PC-9 (cell line): ENCODE measurements at regions of chr9 and their contacts with region 1.

Region 1: GRCh38 chr9:124852829-124853531 is at the start of gene WDR38:
- DNase-seq: peak; percentile 66 to 82
- H3K4me3 ChIP-seq: peak within 1 kb of the TSS; percentile 63
- H3K27ac ChIP-seq: no peak within 1 kb of the TSS
- H3K4me1 ChIP-seq: 0 out of 2 replicates have a peak, but pooled peaks cover 7% of the 10 kb centered on the region
- H3K27me3 ChIP-seq: no peaks in the 10 kb centered on the region
- CTCF ChIP-seq: peak; percentile 99
- total RNA-seq, gene WDR38: not detected in 2 replicates

Region 2: DNA sequence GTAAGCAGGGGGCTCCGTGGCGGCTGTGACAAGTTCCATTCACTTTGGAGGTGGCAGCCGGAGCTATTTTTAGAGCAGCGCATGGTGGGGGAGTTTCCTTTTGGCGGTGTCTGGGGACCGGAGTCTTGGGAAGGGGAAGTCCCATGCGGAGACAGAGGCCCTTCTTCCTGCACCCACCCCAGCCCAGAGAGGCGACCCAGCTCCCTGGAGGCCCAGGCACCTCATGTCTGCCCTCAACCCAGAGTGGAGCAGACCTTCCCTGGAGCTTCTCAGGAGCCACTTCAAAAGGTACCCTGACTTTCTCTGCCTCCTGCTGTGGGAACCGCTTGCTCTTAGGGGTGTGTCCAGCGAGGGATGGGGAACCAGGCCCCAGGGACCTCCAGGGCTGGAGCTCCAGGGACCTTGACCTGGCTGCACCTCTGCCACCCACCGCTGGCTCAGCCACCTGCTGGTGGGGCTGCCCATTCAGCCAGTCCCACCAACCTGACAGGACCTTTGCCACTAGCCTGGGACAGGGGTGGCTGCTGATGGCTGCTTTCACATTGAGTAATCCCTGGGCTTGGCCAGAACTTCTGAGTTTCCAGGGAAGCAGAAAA is 561.1 kb before region 1 on chr9:
- CTCF ChIA-PET with region 1: no interaction called
- POLR2A ChIA-PET with region 1: no interaction called
- intact Hi-C with region 1: no loop called
- DNase-seq: peak in 1 of 2 experiments; percentile 27
- H3K4me3 ChIP-seq: no peak overlapping the region
- H3K27ac ChIP-seq: no peak overlapping the region
- H3K4me1 ChIP-seq: peaks cover 31% of the 10 kb centered on the region
- H3K27me3 ChIP-seq: no peaks in the 10 kb centered on the region
- CTCF ChIP-seq: no peak

Region 3: GRCh38 chr9:124551472-124552272 is 301.3 kb before region 1 on chr9:
- CTCF ChIA-PET with region 1: interaction called, 4 read pairs
- POLR2A ChIA-PET with region 1: interaction called, 11 read pairs
- intact Hi-C with region 1: no loop called
- DNase-seq: peak; percentile 71 to 78
- H3K4me3 ChIP-seq: no peak overlapping the region
- H3K27ac ChIP-seq: peak overlapping the region; percentile 45
- H3K4me1 ChIP-seq: peaks cover 23% of the 10 kb centered on the region
- H3K27me3 ChIP-seq: no peaks in the 10 kb centered on the region
- CTCF ChIP-seq: peak; percentile 78

Region 4: GRCh38 chr9:124812401-124813016 is 40.5 kb before region 1 on chr9:
- CTCF ChIA-PET with region 1: interaction called, 9 read pairs
- POLR2A ChIA-PET with region 1: interaction called, 10 read pairs
- intact Hi-C with region 1: no loop called
- DNase-seq: peak; percentile 93 to 96
- H3K4me3 ChIP-seq: no peak overlapping the region
- H3K27ac ChIP-seq: peak overlapping the region; percentile 94
- H3K4me1 ChIP-seq: peaks cover 45% of the 10 kb centered on the region
- H3K27me3 ChIP-seq: no peaks in the 10 kb centered on the region
- CTCF ChIP-seq: no peak

Region 5: GRCh38 chr9:124839612-124840299 is 13.2 kb before region 1 on chr9:
- CTCF ChIA-PET with region 1: interaction called, 13 read pairs
- POLR2A ChIA-PET with region 1: no interaction called
- intact Hi-C with region 1: no loop called
- DNase-seq: no peak
- H3K4me3 ChIP-seq: no peak overlapping the region
- H3K27ac ChIP-seq: no peak overlapping the region
- H3K4me1 ChIP-seq: peaks cover 19% of the 10 kb centered on the region
- H3K27me3 ChIP-seq: no peaks in the 10 kb centered on the region
- CTCF ChIP-seq: peak; percentile 64

Region 6: GRCh38 chr9:125049212-125050049 is 196.5 kb after region 1 on chr9:
- CTCF ChIA-PET with region 1: no interaction called
- POLR2A ChIA-PET with region 1: no interaction called
- intact Hi-C with region 1: no loop called
- DNase-seq: no peak
- H3K4me3 ChIP-seq: no peak overlapping the region
- H3K27ac ChIP-seq: no peak overlapping the region
- H3K4me1 ChIP-seq: no peaks in the 10 kb centered on the region
- H3K27me3 ChIP-seq: no peaks in the 10 kb centered on the region
- CTCF ChIP-seq: no peak

Region 7: DNA sequence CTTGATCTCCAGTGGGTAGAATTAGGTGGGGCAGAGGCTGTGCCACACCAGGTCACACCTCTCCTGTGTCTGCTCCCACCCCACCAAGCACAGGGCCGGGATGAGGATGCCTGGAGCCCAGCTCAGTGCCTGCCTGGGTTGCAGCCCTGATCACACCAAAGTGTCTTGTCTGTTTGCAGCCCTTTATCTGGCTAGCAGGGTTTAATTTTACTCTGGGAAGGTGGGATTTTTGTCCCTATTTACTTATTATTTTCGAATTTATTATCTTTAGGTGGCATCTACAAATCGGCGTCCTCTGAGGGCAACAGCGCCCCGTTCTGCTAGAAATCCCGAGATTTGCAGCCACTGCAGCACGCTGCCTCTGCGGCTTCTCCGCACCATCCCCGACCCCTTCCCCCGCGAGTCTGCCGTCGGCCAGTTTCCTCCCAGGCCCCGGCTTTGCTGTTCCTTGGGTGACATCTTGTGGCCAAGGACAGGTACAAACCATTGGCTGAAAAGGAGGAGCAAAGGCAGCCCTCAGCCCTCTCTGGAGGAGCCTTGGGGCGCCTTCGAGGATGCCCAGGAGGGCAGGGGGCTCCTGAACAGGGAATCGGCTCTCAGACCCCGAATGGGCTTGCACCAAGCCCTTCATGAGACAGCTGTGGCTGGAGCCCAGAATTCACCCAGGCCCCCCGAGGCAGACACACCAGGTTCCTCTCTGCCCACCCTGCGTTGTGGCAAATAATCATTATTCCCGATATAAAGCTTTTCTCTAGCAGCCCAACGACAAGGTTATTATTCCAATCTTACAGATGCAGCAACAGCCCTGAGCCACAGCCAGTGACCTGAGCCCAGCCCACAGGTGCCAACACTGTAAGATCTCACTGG is 521.7 kb after region 1 on chr9:
- CTCF ChIA-PET with region 1: no interaction called
- POLR2A ChIA-PET with region 1: no interaction called
- intact Hi-C with region 1: loop called (anchors 1 kb)
- DNase-seq: peak; percentile 57 to 70
- H3K4me3 ChIP-seq: peak overlapping the region; percentile 49; the same call in 1 of the 2 replicates
- H3K27ac ChIP-seq: no peak overlapping the region
- H3K4me1 ChIP-seq: no peaks in the 10 kb centered on the region
- H3K27me3 ChIP-seq: no peaks in the 10 kb centered on the region
- CTCF ChIP-seq: peak; percentile 91